ENCODE measurements at regions of chr7 and their contacts with region 1.

Region 1: DNA sequence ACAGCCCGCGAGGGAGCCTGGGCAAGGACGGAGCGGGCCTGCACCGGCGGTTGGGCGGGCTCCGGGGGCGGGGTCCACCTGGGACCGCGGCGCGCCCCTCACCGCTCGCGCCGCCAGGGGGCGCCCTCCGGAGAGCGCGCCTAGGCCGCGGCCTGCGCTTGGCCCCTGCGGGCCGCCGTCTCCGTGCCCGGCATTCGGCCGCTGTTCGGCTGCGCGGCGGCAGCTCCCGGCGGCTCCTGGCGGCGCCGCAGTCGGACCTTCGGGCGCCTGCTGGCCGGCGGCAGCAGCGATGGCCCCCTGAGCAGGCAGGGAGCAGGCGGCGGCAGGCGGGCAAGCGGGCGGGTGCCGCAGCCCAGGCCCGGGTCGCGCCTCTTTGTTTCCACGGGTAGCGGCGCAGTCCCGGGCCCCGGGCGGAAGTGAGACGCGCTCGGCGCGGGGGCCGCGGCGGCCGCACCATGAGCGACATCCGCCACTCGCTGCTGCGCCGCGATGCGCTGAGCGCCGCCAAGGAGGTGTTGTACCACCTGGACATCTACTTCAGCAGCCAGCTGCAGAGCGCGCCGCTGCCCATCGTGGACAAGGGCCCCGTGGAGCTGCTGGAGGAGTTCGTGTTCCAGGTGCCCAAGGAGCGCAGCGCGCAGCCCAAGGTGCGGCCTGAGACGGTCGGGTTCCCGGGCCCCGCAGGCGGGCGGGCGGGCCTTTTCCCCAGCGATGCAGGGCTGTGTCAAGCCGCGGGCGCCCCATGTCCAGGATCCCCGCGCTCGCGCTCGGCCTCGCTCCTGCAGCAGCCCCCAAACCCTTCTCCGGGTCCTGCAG is at the start of gene INTS15:
- DNase-seq: peak; percentile 62 to 78
- ATAC-seq: peak; percentile 92 to 98 (median 94)
- H3K4me3 ChIP-seq: peak within 1 kb of the TSS; percentile 68 to 100 (median 92)
- H3K27ac ChIP-seq: peak within 1 kb of the TSS; percentile 80 to 96 (median 92)
- H3K4me1 ChIP-seq: peaks cover 7 to 21% (median 16%) of the 10 kb centered on the region in 9 donors
- H3K27me3 ChIP-seq: no peaks in the 10 kb centered on the region
- CTCF ChIP-seq: peak; percentile 54 to 97 (median 80)
- total RNA-seq, gene INTS15: 9.8 to 22.0 (median 13.5) TPM

Region 2: GRCh38 chr7:6526997-6527378 is 63.0 kb before region 1 on chr7:
- intact Hi-C with region 1: no loop called
- DNase-seq: no peak
- ATAC-seq: peak in 3 of 8 donors; percentile 5 to 20 (median 11)
- H3K4me3 ChIP-seq: peak overlapping the region in 9 of 10 donors; percentile 31 to 53 (median 43)
- H3K27ac ChIP-seq: no peak overlapping the region
- H3K4me1 ChIP-seq: peaks cover 0 to 15% (median 11%) of the 10 kb centered on the region in 9 donors
- H3K27me3 ChIP-seq: peaks cover 11 to 93% (median 79%) of the 10 kb centered on the region in 7 donors
- CTCF ChIP-seq: no peak

Region 3: DNA sequence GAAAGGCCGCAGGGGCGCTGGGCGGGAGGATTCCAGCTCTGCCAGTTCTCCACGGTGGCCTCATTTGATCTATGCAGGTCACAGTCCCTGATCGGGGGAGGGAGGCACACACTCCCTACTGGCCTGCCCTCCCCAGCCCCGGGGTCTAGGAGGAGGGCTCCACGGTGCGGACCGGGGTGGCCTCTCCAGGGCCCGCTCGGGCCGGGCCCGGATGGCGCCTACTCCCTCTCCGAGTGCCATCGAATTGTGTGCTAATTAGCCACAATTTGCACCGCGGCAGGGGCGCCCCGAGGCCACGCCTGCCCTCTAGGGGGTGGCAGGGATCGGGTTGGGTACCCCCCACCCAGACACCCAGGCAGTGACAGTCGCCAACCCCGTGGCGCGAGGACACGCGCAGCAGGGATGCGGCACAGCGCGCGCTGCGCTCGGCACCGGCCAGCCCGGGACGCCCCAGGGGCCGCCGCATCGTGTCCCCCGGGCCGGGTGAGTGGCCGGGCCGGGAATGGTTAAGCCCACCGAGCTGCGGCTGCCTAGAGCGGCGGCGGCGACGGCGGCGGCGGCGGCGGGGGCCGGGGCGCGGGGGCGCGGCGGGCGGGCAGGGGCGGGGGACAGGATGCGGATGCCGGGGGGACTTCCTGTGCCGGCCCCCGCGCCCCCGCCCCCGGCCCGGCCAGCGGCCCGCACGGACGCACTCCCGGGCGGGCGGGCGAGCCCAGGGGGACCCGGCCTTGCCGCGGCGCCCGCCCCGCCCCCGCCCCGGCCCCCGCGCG is 25.1 kb after region 1 on chr7 and contains the start of gene ZNF853:
- intact Hi-C with region 1: no loop called
- DNase-seq: no peak
- ATAC-seq: peak; percentile 41 to 84 (median 56)
- H3K4me3 ChIP-seq: peak within 1 kb of the TSS; percentile 44 to 86 (median 74)
- H3K27ac ChIP-seq: peak within 1 kb of the TSS in 7 of 10 donors; percentile 40 to 68 (median 55)
- H3K4me1 ChIP-seq: peaks cover 0 to 16% (median 11%) of the 10 kb centered on the region in 9 donors
- H3K27me3 ChIP-seq: peaks cover 0 to 33% (median 0%) of the 10 kb centered on the region in 7 donors
- CTCF ChIP-seq: peak in 3 of 9 donors; percentile 21 to 23 (median 22)
- total RNA-seq, gene ZNF853: 8.8 to 16.3 (median 13.9) TPM

Region 4: GRCh38 chr7:6934986-6935385 is 344.9 kb after region 1 on chr7:
- intact Hi-C with region 1: loop called in 1 of 10 experiments (anchors 5 kb)
- DNase-seq: no peak
- ATAC-seq: no peak
- H3K4me3 ChIP-seq: no peak overlapping the region
- H3K27ac ChIP-seq: no peak overlapping the region
- H3K4me1 ChIP-seq: no peaks in the 10 kb centered on the region
- H3K27me3 ChIP-seq: no peaks in the 10 kb centered on the region
- CTCF ChIP-seq: no peak